Dorsolateral prefrontal cortex (tissue), 120 donors: ENCODE measurements at regions of chr1 and their contacts with region 1.

Region 1: DNA sequence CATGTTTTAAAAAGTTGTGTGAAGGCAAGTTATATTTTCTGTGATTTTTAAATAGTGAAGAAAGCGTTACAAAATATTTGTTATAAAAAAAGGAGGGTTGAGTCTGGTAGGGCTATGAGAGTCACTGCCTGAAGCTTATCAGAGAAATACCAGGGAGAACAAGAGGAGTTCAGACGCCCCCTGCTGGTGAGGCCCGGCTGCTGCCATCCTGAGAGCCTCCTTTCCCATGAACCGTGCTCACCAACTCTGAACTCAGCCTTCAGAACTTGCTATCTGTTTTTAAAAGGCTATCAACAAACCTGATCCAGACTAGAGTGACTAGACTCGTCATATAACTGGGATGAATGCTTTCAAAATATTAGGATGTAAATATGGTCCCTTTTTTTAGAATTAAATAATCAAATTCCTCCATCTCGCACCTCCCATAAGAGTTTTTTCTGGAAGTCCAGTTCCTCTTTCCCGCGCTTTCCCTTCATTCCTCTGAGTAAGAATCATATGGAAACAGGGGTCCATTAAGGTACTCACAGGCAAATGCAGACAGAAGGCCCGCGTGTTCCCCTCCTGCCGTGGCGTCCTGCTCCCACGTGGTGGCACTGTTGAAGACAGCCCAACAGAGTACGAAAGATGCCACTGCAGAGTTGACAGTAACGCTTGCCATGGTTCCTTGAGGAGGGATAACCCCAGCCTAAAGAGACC is 26.2 kb upstream of the SPATA6 start:
- DNase-seq: peak; percentile 50 to 95 (median 89)
- H3K4me3 ChIP-seq: peak overlapping the region in 9 of 59 donors; percentile 0 to 44 (median 18)
- H3K27ac ChIP-seq: peak overlapping the region in 26 of 59 donors; percentile 2 to 77 (median 50)
- H3K27me3 ChIP-seq: no peaks in the 10 kb centered on the region
- CTCF ChIP-seq: peak; percentile 77 to 99 (median 93)

Region 2: GRCh38 chr1:48356901-48357300 is 141.3 kb before region 1 on chr1:
- intact Hi-C with region 1: loop called (anchors 5 to 10 kb)
- DNase-seq: no peak
- H3K4me3 ChIP-seq: no peak overlapping the region
- H3K27ac ChIP-seq: no peak overlapping the region
- H3K27me3 ChIP-seq: no peaks in the 10 kb centered on the region
- CTCF ChIP-seq: peak in 38 of 56 donors; percentile 10 to 68 (median 31)

Region 3: DNA sequence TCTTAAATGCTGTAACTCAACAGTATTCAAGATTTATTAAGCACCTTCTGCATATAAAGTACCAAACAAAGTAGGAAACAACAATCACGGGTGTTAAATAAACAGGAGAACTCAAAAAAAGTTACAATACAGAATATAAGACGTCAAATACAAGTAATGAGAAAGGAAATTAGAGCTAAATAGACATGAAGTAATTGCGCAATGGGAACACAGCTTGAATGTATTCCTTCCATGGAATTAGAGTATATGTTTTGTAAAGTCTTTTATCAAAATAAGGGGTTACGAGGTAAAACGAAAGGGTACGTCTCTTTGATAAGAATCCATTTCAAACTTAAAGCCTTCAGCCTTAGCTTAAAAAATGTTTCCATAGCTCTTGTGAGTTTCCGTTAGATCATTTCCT is 135.3 kb before region 1 on chr1:
- intact Hi-C with region 1: loop called (anchors 5 to 10 kb)
- DNase-seq: no peak
- H3K4me3 ChIP-seq: no peak overlapping the region
- H3K27ac ChIP-seq: no peak overlapping the region
- H3K27me3 ChIP-seq: no peaks in the 10 kb centered on the region
- CTCF ChIP-seq: no peak

Region 4: GRCh38 chr1:48450505-48450904 is 47.7 kb before region 1 on chr1:
- intact Hi-C with region 1: loop called (anchors 1 to 5 kb)
- DNase-seq: peak in 1 of 10 donors; percentile 40
- H3K4me3 ChIP-seq: peak overlapping the region in 2 of 59 donors; percentile 4 to 14
- H3K27ac ChIP-seq: peak overlapping the region in 19 of 59 donors; percentile 2 to 66 (median 24)
- H3K27me3 ChIP-seq: no peaks in the 10 kb centered on the region
- CTCF ChIP-seq: peak in 53 of 56 donors; percentile 12 to 68 (median 42)

Region 5: DNA sequence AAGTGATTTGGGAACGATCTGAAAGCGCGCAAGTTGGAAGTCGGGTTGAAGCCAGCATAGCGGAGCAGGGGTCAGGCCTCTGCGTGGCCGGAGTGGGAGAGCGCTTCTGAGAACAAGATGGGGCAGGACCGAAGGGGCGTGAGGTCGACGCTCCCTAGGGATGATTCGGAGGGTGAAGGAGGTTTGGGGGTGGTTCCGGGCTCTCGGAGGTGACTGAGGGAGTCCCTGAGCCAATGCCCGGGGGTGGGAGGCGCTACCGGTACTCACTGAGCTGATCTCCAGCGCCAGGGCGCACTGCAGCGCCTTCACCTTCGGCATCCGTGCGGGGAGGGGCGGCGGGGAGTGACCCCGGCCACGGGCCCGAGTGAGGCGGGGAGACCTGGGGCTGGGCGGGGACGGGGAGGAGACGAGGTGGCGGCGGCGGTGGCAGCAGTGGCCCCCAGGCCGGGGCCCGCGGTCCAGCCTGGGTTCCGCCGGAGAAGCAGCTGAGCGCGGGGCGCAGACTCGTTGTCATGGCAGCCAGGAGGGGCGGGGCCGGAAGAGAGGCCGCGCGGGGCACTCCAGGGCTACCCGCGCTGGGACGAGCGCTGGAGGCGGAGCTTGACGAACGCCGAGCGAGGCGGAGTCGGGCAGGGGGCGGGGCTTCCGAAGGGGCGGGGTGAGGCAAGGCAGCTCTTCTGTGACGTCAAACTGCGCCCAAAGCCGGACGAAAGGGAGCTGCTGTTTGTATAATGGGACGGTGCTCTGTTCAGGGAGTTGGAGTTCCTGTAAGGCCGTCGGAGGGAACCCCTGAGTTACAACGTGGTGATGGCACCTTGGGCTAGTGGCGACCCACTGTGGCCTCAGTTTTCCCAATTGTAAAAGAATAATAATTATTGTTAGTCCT is 26.3 kb before region 1 on chr1 and contains the start of gene SPATA6:
- intact Hi-C with region 1: loop called (anchors 1 to 2 kb)
- DNase-seq: peak; percentile 62 to 98 (median 97)
- H3K4me3 ChIP-seq: peak within 1 kb of the TSS; percentile 35 to 88 (median 79)
- H3K27ac ChIP-seq: peak within 1 kb of the TSS; percentile 64 to 96 (median 89)
- H3K27me3 ChIP-seq: no peaks in the 10 kb centered on the region
- CTCF ChIP-seq: peak in 28 of 56 donors; percentile 3 to 46 (median 15)
- total RNA-seq, gene SPATA6: 20.0 to 77.4 (median 33.9) TPM

Region 6: DNA sequence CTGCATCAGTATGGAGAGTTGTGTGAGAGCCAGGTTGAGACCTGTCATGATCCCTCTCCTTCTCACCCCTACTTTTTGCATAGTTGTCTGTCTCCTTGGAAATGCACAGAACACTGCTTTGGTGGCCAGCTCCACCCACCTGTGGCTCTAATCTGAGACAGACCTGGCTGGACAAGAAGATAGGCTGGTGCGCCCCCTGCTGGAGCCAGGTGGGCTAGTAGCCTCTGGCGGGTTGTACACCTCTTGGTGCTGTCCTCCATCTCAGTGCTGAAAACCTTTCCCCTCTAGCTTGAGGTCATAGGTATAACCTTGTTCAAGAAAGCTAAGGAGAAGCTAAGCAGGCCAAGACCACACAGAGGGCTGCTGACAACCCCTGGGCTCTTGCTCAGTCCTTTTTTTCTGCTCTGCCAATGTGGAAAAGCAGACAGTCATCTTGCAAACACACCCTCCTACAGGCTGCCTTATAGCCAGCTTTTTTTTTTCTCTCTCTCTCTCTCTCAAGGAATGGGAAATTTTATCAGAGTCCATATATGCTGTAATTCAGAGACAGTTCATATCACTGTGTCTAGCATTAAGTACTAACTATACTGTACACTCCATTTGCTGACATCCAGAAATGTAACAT is 32.6 kb after region 1 on chr1:
- intact Hi-C with region 1: loop called (anchors 2 kb)
- DNase-seq: peak; percentile 11 to 73 (median 61)
- H3K4me3 ChIP-seq: no peak overlapping the region
- H3K27ac ChIP-seq: peak overlapping the region in 3 of 59 donors; percentile 11 to 62 (median 59)
- H3K27me3 ChIP-seq: no peaks in the 10 kb centered on the region
- CTCF ChIP-seq: peak in 54 of 56 donors; percentile 49 to 91 (median 72)